Right ventricle myocardium superior (tissue), 1 donor: ENCODE measurements at regions of chr16 and their contacts with region 1.

Region 1: GRCh38 chr16:10918294-10919002 is 23.8 kb downstream of the DEXI start:
- DNase-seq: peak; percentile 94
- ATAC-seq: peak; percentile 79

Region 2: GRCh38 chr16:10743610-10744393 is 174.6 kb before region 1 on chr16 and contains the start of gene NUBP1:
- intact Hi-C with region 1: loop called (anchors 2 kb)
- DNase-seq: peak; percentile 99
- ATAC-seq: peak; percentile 95
- total RNA-seq, gene NUBP1: 41.4 TPM